Activated B cell treated with CpG ODN at 0.5 μM for 24 hours (primary cell): ENCODE measurements at regions of chr5 and their contacts with region 1.

Region 1: DNA sequence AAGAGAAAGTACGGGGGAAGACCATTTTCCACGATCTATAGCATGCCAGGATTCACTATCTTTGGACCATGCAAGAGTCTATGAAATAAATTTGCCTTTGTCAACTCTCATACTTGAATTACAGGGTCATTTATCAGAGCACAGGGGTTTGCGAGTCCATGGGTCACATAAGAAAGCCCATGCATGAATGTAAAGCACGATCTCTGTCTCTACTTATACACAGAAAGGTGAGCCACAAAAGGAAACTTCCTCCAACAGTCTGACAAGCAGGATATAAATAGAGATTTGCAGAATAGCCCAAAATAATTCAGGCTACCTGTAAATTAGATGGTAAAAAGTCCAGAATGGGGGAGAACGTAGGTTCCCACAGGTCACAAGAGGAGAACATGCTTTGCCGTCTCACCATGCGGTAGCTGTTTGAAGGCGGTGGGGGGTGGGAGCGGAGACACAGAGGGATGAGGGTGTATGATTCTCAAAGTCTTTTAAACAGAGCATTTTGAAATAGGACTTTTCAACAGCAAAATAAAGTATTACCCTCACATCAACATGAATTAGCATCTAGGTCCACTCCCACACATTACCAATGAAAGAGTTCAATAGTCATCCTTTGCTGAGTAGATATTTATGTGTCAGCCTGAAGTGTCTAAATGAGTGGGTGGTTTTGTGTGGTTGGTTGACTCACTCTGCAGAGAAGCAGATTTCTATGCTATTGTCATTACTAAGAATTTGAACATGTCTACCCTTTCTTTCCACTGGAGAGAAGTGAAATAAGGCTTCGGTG is 279.7 kb downstream of the EBF1 start:
- DNase-seq: no peak
- ATAC-seq: peak; percentile 76
- H3K4me3 Mint-ChIP-seq: peak overlapping the region; percentile 75
- H3K27ac Mint-ChIP-seq: peak overlapping the region; percentile 95
- H3K4me1 Mint-ChIP-seq: peaks cover 99% of the 10 kb centered on the region
- H3K27me3 Mint-ChIP-seq: no peaks in the 10 kb centered on the region
- CTCF ChIP-seq: no peak

Region 2: GRCh38 chr5:158751961-158752655 is 67.9 kb before region 1 on chr5:
- CTCF ChIA-PET with region 1: interaction called, 4 read pairs
- POLR2A ChIA-PET with region 1: interaction called, 3 read pairs
- intact Hi-C with region 1: loop called (anchors 5 kb)
- DNase-seq: no peak
- ATAC-seq: peak; percentile 83
- H3K4me3 Mint-ChIP-seq: peak overlapping the region; percentile 71
- H3K27ac Mint-ChIP-seq: peak overlapping the region; percentile 84
- H3K4me1 Mint-ChIP-seq: peaks cover 92% of the 10 kb centered on the region
- H3K27me3 Mint-ChIP-seq: no peaks in the 10 kb centered on the region
- CTCF ChIP-seq: no peak

Region 3: DNA sequence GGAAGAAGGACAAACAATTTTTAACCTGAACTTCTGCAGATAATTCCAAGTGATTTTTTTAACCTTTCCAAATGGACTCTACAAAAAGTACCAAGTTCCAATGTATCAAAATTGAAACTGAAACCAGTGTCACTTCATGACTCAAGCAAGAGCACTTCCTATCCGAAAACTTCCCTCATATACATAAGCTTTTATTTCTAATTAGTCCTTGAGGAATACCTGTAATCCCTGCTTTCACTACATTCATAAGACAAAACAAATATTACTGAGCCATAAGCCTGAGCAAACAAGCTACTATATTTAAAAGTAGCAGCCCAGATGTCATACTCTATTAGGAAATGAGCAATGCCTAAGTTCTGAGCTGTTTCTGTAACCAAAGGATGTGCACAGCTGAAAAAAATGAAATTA is 55.2 kb after region 1 on chr5:
- CTCF ChIA-PET with region 1: interaction called, 3 read pairs
- POLR2A ChIA-PET with region 1: interaction called, 8 read pairs
- intact Hi-C with region 1: loop called (anchors 2 kb)
- DNase-seq: no peak
- ATAC-seq: peak; percentile 36
- H3K4me3 Mint-ChIP-seq: peak overlapping the region; percentile 72
- H3K27ac Mint-ChIP-seq: peak overlapping the region; percentile 93
- H3K4me1 Mint-ChIP-seq: peaks cover 93% of the 10 kb centered on the region
- H3K27me3 Mint-ChIP-seq: no peaks in the 10 kb centered on the region
- CTCF ChIP-seq: no peak